MCF 10A (cell line): ENCODE measurements at regions of chr5 and their contacts with region 1.

Region 1: DNA sequence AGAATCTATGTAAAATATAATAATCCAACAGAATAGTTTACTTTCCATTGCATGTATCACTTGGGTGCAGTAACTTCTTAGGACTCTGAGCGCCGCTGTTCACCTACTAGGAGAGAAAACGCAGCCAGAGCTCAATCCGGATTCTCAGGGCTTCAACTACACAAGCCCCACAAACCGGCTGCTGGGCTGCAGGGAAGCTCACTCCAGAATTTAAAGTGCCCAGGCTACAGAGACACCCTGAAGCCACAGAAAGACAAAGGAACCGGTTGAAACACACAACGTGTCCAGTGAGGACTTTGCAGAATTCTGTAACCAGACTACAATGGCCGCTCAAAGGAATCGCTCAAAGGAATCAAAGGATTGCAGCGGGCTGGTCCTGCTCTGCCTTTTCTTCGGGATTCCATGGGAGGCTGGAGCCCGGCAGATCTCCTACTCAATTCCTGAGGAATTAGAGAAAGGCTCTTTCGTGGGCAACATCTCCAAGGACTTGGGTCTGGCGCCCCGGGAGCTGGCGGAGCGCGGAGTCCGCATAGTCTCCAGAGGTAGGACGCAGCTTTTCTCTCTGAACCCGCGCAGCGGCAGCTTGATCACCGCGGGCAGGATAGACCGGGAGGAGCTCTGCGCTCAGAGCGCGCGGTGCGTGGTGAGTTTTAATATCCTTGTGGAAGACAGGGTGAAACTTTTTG is at the start of gene PCDHGA10:
- DNase-seq: peak; percentile 83
- H3K4me3 Mint-ChIP-seq: peak within 1 kb of the TSS; percentile 54
- H3K27ac Mint-ChIP-seq: no peak within 1 kb of the TSS
- H3K4me1 Mint-ChIP-seq: no peaks in the 10 kb centered on the region
- H3K27me3 Mint-ChIP-seq: no peaks in the 10 kb centered on the region
- CTCF ChIP-seq: peak; percentile 67
- total RNA-seq, gene PCDHGA10: 1.4 TPM in 2 replicates

Region 2: DNA sequence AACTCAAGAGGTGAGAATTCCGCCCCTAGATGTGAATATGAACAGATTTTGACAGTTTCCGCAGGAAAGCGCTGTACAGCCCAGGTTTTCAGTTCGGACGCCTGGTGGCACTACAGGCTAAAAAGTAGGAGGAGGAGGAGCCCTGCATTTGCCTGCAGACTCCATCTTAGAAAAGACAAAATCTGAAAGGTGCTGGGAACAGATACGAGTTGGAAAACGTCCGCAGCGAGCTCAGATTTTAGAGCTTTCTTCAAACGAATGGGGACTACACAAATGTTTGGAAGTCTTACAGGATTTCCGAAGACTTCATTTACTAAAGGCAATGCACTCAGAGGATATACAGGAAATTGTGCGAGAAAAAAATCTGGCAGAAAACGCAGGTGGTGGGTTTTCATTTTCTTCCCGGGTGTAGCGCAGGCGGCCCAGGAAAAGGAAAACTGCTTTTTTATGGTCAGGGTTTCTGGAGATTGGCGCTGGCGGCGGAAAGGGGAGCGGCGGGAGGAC is 328.5 kb before region 1 on chr5:
- CTCF ChIA-PET with region 1: no interaction called
- POLR2A ChIA-PET with region 1: no interaction called
- intact Hi-C with region 1: loop called (anchors 10 kb)
- DNase-seq: peak; percentile 49
- H3K4me3 Mint-ChIP-seq: peak overlapping the region; percentile 87
- H3K27ac Mint-ChIP-seq: peak overlapping the region; percentile 84
- H3K4me1 Mint-ChIP-seq: peaks cover 7% of the 10 kb centered on the region
- H3K27me3 Mint-ChIP-seq: no peaks in the 10 kb centered on the region
- CTCF ChIP-seq: peak; percentile 59

Region 3: DNA sequence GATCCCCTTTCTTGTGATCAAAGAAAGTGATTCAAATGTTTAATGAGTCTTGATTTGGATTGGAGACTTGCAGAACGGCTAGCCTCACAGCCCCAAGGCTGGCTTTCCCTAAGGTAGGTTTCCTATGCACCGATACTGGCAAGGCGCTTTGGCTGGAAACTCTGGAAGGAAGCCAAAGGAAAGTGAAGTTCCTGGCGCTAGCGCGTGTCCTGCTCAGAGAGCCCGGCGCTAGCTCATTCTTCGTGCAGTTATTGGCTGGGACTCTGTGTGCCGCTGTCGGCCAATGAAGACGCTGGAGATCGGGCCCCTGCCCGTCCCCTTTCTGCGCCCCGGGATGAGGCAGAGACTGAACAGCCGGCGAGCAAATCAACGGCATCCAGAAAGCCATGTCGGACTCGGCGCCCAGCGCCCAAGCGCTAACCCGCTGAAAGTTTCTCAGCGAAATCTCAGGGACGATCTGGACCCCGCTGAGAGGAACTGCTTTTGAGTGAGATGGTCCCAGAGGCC is 62.7 kb after region 1 on chr5 and contains the start of gene PCDHGC3:
- CTCF ChIA-PET with region 1: interaction called, 10 read pairs
- POLR2A ChIA-PET with region 1: interaction called, 3 read pairs
- intact Hi-C with region 1: no loop called
- DNase-seq: peak; percentile 98
- H3K4me3 Mint-ChIP-seq: peak within 1 kb of the TSS; percentile 94
- H3K27ac Mint-ChIP-seq: peak within 1 kb of the TSS; percentile 84
- H3K4me1 Mint-ChIP-seq: peaks cover 18% of the 10 kb centered on the region
- H3K27me3 Mint-ChIP-seq: no peaks in the 10 kb centered on the region
- CTCF ChIP-seq: peak; percentile 55
- total RNA-seq, gene PCDHGC3: 17.3 and 31.7 TPM in 2 replicates